ENCODE measurements at regions of chr7 and their contacts with region 1.

Region 1: DNA sequence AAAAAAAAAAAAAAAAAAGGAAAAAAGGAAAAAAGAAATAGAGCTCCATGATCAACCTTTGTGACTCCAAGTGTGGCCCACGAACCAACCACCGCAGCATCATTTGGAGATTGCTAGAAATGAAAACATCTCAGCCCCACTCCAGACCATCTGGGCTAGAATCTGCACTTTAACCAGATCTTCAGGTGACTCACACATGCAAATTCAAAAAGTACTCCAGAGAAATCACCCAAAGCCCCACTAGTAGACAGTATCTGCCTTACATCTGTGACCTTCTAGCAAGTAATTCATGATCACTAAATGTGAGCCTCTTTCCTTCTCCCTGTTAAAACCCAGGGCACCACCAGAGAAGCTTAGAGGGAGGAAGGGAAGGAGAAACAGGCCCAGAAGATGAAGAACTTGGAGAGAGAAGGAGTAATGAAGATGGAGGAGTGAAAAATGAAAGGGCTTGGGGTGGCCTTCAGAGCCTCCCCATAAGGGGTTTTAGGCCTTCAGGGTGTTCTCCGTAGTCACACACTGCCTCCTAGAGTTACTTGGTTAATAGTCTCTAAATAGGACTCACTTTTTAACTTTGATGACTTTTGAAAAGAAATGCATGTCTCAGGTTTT is 94.0 kb downstream of the SLC37A3 start:
- DNase-seq: peak; percentile 83
- H3K4me3 Mint-ChIP-seq: no peak overlapping the region
- H3K27ac Mint-ChIP-seq: peak overlapping the region; percentile 89
- H3K4me1 Mint-ChIP-seq: peaks cover 10% of the 10 kb centered on the region
- H3K27me3 Mint-ChIP-seq: no peaks in the 10 kb centered on the region

Region 2: GRCh38 chr7:140260352-140261104 is 43.8 kb before region 1 on chr7:
- intact Hi-C with region 1: loop called (anchors 5 kb)
- DNase-seq: no peak
- H3K4me3 Mint-ChIP-seq: no peak overlapping the region
- H3K27ac Mint-ChIP-seq: no peak overlapping the region
- H3K4me1 Mint-ChIP-seq: peaks cover 38% of the 10 kb centered on the region
- H3K27me3 Mint-ChIP-seq: peaks cover 4% of the 10 kb centered on the region

Region 3: GRCh38 chr7:140330128-140330527 is 25.8 kb after region 1 on chr7:
- intact Hi-C with region 1: no loop called
- DNase-seq: no peak
- H3K4me3 Mint-ChIP-seq: no peak overlapping the region
- H3K27ac Mint-ChIP-seq: peak overlapping the region; percentile 52
- H3K4me1 Mint-ChIP-seq: peaks cover 8% of the 10 kb centered on the region
- H3K27me3 Mint-ChIP-seq: no peaks in the 10 kb centered on the region

Region 4: DNA sequence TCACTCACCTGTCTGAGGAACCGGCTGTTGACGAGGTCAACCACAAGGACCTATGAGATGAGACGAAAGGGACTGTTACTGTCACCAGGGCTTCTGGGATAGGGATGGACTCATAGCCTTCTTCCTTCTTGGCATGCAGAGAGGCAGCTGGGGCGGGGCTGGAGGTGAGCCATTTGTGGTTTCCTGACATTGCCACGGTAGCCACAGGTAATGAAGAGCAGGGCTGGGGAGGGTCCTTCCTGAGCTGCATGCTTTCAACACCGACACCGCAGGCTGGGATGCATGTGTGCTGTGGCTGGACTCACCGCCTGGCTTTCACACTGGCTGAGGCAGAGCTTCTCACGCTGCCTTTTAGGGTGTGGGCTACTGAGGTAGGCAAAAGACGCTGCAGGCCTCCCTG is 221.4 kb after region 1 on chr7:
- intact Hi-C with region 1: no loop called
- DNase-seq: peak; percentile 73
- H3K4me3 Mint-ChIP-seq: no peak overlapping the region
- H3K27ac Mint-ChIP-seq: no peak overlapping the region
- H3K4me1 Mint-ChIP-seq: peaks cover 6% of the 10 kb centered on the region
- H3K27me3 Mint-ChIP-seq: peaks cover 4% of the 10 kb centered on the region

Measured in activated CD4-positive, alpha-beta T cell treated with anti-CD3 and anti-CD28 coated beads, Interleukin-2, amount 10 ng/mL, durations not matched to agents 24 days and 14 days (primary cell).